ENCODE measurements at regions of chr5 and their contacts with region 1.

Region 1: GRCh38 chr5:43313035-43313853 is at the start of gene HMGCS1:
- DNase-seq: peak; percentile 100
- ATAC-seq: peak; percentile 84
- H3K4me3 ChIP-seq: peak within 1 kb of the TSS; percentile 77 to 94 (median 89)
- H3K4me3 Mint-ChIP-seq: peak within 1 kb of the TSS; percentile 99
- H3K27ac ChIP-seq: peak within 1 kb of the TSS; percentile 95 to 98
- H3K27ac Mint-ChIP-seq: peak within 1 kb of the TSS; percentile 97
- H3K4me1 ChIP-seq: peaks cover 18 to 31% of the 10 kb centered on the region in 2 donors
- H3K4me1 Mint-ChIP-seq: peaks cover 39% of the 10 kb centered on the region
- H3K27me3 ChIP-seq: no peaks in the 10 kb centered on the region
- H3K27me3 Mint-ChIP-seq: no peaks in the 10 kb centered on the region
- CTCF ChIP-seq: no peak
- total RNA-seq, gene HMGCS1: 68.4 and 68.7 TPM in 2 replicates

Region 2: DNA sequence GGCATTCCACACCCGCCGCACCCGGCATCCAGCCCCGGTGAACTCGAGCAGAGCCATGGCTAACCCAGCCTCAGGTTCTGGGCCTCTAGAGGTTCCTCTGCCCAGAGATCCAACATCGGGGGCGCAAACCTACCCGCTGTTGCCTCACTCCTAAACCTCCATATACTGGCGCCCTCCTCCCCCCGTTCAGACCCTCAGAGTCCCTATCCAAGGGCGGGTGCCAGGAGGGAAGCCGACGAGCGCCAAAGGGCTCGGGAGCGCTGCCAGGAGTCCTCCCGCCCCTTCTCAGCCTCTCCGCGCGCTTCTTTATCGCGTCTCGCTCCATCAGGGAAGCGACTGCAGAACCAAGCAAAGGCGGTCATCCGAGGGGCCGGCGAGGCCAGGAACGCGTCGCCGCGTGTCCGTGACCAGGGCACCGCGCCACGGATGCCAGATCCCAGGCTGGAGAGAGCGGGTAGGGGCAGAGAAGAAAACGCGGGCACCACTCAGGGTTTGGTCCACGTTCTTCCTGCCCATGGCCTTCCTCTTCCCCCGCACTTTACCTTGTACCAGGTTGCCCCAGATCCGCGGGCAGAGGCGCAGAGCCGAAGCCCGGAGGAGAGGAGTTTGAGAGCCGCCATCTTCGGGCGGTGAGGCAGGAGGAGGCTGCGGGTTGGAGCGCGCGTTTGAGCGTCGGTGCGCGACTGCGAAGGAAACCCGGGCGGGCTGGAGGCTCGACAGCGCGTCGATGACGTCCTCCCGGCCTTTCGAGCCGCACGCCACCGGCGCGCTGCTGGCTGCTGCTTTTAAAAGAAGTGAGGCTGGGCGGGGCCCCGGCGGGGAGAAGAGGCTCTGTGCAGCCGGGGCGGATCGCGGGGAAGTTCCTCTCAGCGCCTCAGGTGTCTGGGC is 1443.3 kb before region 1 on chr5 and contains the start of gene OXCT1:
- CTCF ChIA-PET with region 1: no interaction called
- POLR2A ChIA-PET with region 1: no interaction called
- intact Hi-C with region 1: loop called (anchors 1 kb)
- DNase-seq: peak; percentile 95
- ATAC-seq: peak; percentile 95
- H3K4me3 ChIP-seq: peak within 1 kb of the TSS; percentile 74 to 97 (median 89)
- H3K4me3 Mint-ChIP-seq: peak within 1 kb of the TSS; percentile 94
- H3K27ac ChIP-seq: peak within 1 kb of the TSS; percentile 79 to 85
- H3K27ac Mint-ChIP-seq: peak within 1 kb of the TSS; percentile 95
- H3K4me1 ChIP-seq: peaks cover 16 to 20% of the 10 kb centered on the region in 2 donors
- H3K4me1 Mint-ChIP-seq: peaks cover 38% of the 10 kb centered on the region
- H3K27me3 ChIP-seq: no peaks in the 10 kb centered on the region
- H3K27me3 Mint-ChIP-seq: no peaks in the 10 kb centered on the region
- CTCF ChIP-seq: no peak
- total RNA-seq, gene OXCT1: 34.9 and 35.6 TPM in 2 replicates

Region 3: DNA sequence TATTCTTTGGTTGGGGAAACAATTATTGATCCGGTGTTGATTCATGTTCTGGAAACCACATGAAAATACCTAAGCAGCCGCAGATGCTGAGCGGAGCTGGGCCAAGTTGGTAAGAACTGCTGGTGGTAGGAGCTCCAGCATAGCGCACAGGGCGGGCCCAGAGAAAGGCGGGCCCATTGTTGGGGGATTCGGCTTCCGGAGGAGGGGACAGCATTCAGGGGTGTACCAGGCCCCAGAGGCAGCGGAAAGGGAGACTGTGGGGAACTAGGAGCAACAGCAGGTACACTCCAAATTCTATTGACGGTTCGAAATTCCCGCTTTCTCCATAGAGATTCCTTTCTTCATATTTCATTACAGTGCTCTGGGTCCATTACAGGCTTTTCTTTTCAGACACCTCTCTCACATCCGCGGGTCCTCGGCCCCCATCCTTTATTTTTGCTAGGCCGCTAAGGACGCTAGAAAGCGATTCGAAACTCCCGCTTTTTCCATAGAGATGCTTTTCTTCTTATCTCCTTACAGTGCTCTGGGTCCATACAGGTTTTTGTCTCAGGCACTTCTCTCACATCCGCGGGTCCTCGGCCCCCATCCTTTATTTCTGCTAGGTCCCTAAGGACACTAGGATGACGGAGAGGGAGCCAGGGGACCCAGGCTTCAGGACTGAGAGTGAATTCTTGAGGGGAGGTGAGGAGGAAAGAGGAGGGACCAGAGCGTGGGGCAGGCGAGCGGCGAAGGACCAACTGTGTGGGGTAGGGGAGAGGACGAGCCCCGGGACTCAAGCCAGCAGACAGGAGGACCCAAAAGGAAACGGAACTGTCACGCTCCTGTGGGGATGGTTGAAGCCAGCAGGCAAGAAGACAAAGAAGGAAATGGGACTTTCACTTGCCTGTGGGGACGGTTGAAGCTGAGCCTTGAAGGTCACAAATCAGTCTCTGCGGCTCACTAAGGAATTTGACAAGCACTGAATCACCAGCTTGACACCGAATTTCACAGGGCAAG is 556.3 kb before region 1 on chr5 and contains the start of gene CCDC152:
- CTCF ChIA-PET with region 1: no interaction called
- POLR2A ChIA-PET with region 1: no interaction called
- intact Hi-C with region 1: no loop called
- DNase-seq: peak; percentile 50
- ATAC-seq: peak; percentile 80
- H3K4me3 ChIP-seq: peak within 1 kb of the TSS; percentile 8 to 66 (median 52)
- H3K4me3 Mint-ChIP-seq: peak within 1 kb of the TSS; percentile 89
- H3K27ac ChIP-seq: peak within 1 kb of the TSS; percentile 1 to 7
- H3K27ac Mint-ChIP-seq: peak within 1 kb of the TSS; percentile 54
- H3K4me1 ChIP-seq: peaks cover 4 to 7% of the 10 kb centered on the region in 2 donors
- H3K4me1 Mint-ChIP-seq: peaks cover 9% of the 10 kb centered on the region
- H3K27me3 ChIP-seq: no peaks in the 10 kb centered on the region
- H3K27me3 Mint-ChIP-seq: no peaks in the 10 kb centered on the region
- CTCF ChIP-seq: no peak
- total RNA-seq, gene CCDC152: 4.2 and 4.8 TPM in 2 replicates

Region 4: GRCh38 chr5:42772265-42772993 is 540.8 kb before region 1 on chr5:
- CTCF ChIA-PET with region 1: no interaction called
- POLR2A ChIA-PET with region 1: no interaction called
- intact Hi-C with region 1: no loop called
- DNase-seq: no peak
- ATAC-seq: no peak
- H3K4me3 ChIP-seq: no peak overlapping the region
- H3K4me3 Mint-ChIP-seq: no peak overlapping the region
- H3K27ac ChIP-seq: no peak overlapping the region
- H3K27ac Mint-ChIP-seq: no peak overlapping the region
- H3K4me1 ChIP-seq: no peaks in the 10 kb centered on the region
- H3K4me1 Mint-ChIP-seq: no peaks in the 10 kb centered on the region
- H3K27me3 ChIP-seq: no peaks in the 10 kb centered on the region
- H3K27me3 Mint-ChIP-seq: peaks cover 15% of the 10 kb centered on the region
- CTCF ChIP-seq: no peak

Region 5: DNA sequence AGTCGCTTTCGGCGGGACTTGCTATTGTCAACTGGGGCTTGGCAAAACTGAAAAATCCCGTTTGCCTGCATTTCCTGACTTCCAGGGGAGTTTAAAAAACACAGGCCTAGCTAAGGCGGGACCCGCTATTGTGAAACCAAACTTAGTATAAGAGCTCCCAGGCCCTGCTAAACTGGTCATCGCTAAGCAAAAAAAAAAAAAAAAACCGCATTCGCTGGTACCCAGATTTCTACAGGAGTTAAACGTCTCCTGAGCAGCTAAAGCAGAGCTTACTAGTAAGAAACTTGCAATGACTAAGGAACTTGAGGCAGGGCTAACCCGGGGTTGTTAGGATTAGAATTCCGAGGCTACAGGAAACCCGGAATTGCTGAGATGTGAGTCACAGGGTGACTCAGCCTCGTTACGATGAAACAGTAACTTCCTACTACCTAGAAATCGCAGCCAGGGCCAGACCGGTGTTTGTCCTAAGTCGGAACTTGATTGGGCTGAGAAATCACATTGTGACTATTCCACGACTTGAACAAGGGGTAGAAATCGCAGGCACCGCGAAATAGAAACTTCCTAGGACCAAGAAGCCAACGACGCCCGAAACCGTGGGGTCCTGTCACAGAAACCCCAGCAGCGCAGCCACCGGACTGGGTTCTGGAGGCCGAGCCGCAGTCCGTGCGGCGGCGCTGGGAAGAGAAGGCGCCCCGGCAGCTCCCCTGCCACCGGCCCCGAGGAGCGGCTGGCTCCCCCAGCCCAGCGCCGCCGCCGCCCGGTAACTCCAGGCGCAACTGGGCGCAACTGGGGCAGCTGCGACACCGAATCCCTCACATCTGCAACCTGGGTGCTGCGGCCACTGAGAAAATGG is 362.6 kb before region 1 on chr5:
- CTCF ChIA-PET with region 1: no interaction called
- POLR2A ChIA-PET with region 1: interaction called, 6 read pairs
- intact Hi-C with region 1: loop called (anchors 2 kb)
- DNase-seq: peak; percentile 85
- ATAC-seq: peak; percentile 44
- H3K4me3 ChIP-seq: peak overlapping the region; percentile 67 to 92 (median 85)
- H3K4me3 Mint-ChIP-seq: peak overlapping the region; percentile 99
- H3K27ac ChIP-seq: peak overlapping the region; percentile 93 to 97
- H3K27ac Mint-ChIP-seq: peak overlapping the region; percentile 100
- H3K4me1 ChIP-seq: peaks cover 13 to 33% of the 10 kb centered on the region in 2 donors
- H3K4me1 Mint-ChIP-seq: peaks cover 33% of the 10 kb centered on the region
- H3K27me3 ChIP-seq: no peaks in the 10 kb centered on the region
- H3K27me3 Mint-ChIP-seq: no peaks in the 10 kb centered on the region
- CTCF ChIP-seq: no peak

Region 6: GRCh38 chr5:43040287-43041098 is 272.8 kb before region 1 on chr5 and contains the start of gene ANXA2R:
- CTCF ChIA-PET with region 1: no interaction called
- POLR2A ChIA-PET with region 1: interaction called, 6 read pairs
- intact Hi-C with region 1: loop called (anchors 1 kb)
- DNase-seq: peak; percentile 97
- ATAC-seq: peak; percentile 60
- H3K4me3 ChIP-seq: peak within 1 kb of the TSS; percentile 62 to 95 (median 81)
- H3K4me3 Mint-ChIP-seq: peak within 1 kb of the TSS; percentile 97
- H3K27ac ChIP-seq: peak within 1 kb of the TSS; percentile 98 to 99
- H3K27ac Mint-ChIP-seq: peak within 1 kb of the TSS; percentile 98
- H3K4me1 ChIP-seq: peaks cover 25 to 44% of the 10 kb centered on the region in 2 donors
- H3K4me1 Mint-ChIP-seq: peaks cover 39% of the 10 kb centered on the region
- H3K27me3 ChIP-seq: no peaks in the 10 kb centered on the region
- H3K27me3 Mint-ChIP-seq: no peaks in the 10 kb centered on the region
- CTCF ChIP-seq: peak; percentile 86
- total RNA-seq, gene ANXA2R: 19.3 and 20.0 TPM in 2 replicates

Region 7: GRCh38 chr5:43294226-43294625 is 19.0 kb before region 1 on chr5:
- CTCF ChIA-PET with region 1: no interaction called
- POLR2A ChIA-PET with region 1: no interaction called
- intact Hi-C with region 1: no loop called
- DNase-seq: no peak
- ATAC-seq: no peak
- H3K4me3 ChIP-seq: no peak overlapping the region
- H3K4me3 Mint-ChIP-seq: no peak overlapping the region
- H3K27ac ChIP-seq: no peak overlapping the region
- H3K27ac Mint-ChIP-seq: no peak overlapping the region
- H3K4me1 ChIP-seq: no peaks in the 10 kb centered on the region
- H3K4me1 Mint-ChIP-seq: no peaks in the 10 kb centered on the region
- H3K27me3 ChIP-seq: no peaks in the 10 kb centered on the region
- H3K27me3 Mint-ChIP-seq: no peaks in the 10 kb centered on the region
- CTCF ChIP-seq: no peak

Region 8: DNA sequence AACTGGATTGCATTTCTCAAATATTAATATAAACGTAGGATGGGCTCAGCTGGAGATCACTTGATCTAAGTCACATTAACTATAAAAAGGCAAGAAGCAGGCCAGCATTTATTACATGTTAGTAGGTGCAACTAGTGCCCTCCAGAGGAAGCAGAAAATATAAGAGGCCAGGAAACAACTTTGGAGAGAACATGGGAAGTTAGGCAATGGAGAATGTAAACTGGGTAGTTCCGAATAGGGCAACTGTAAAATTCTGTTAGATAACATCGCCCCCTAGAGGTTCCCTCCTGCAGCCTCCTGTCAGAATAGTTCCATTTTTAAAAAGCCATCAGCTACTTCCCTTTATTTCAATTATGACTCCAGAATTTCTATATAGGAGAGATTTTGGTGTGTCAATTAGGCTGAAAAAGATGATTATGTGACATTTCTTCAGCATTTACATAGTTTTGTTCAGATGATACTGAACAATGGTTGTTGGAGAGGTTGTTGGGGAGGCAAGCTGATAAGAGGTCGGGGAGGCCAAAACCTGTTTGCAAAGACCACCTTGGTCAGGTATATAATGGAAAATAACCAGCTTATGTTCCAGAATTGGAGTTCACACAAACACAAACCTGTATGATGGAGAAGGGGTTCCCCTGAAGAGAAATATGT is 76.6 kb after region 1 on chr5:
- CTCF ChIA-PET with region 1: interaction called, 25 read pairs
- POLR2A ChIA-PET with region 1: no interaction called
- intact Hi-C with region 1: no loop called
- DNase-seq: peak; percentile 73
- ATAC-seq: peak; percentile 61
- H3K4me3 ChIP-seq: no peak overlapping the region
- H3K4me3 Mint-ChIP-seq: no peak overlapping the region
- H3K27ac ChIP-seq: no peak overlapping the region
- H3K27ac Mint-ChIP-seq: no peak overlapping the region
- H3K4me1 ChIP-seq: no peaks in the 10 kb centered on the region
- H3K4me1 Mint-ChIP-seq: peaks cover 17% of the 10 kb centered on the region
- H3K27me3 ChIP-seq: no peaks in the 10 kb centered on the region
- H3K27me3 Mint-ChIP-seq: no peaks in the 10 kb centered on the region
- CTCF ChIP-seq: peak; percentile 91

Region 9: GRCh38 chr5:43514816-43515677 is 201.8 kb after region 1 on chr5 and contains the start of gene C5orf34:
- CTCF ChIA-PET with region 1: interaction called, 4 read pairs
- POLR2A ChIA-PET with region 1: no interaction called
- intact Hi-C with region 1: loop called (anchors 1 kb)
- DNase-seq: peak; percentile 93
- ATAC-seq: peak; percentile 99
- H3K4me3 ChIP-seq: peak within 1 kb of the TSS; percentile 78 to 93 (median 88)
- H3K4me3 Mint-ChIP-seq: peak within 1 kb of the TSS; percentile 94
- H3K27ac ChIP-seq: peak within 1 kb of the TSS; percentile 85 to 93
- H3K27ac Mint-ChIP-seq: peak within 1 kb of the TSS; percentile 88
- H3K4me1 ChIP-seq: peaks cover 12 to 18% of the 10 kb centered on the region in 2 donors
- H3K4me1 Mint-ChIP-seq: peaks cover 23% of the 10 kb centered on the region
- H3K27me3 ChIP-seq: no peaks in the 10 kb centered on the region
- H3K27me3 Mint-ChIP-seq: no peaks in the 10 kb centered on the region
- CTCF ChIP-seq: no peak
- total RNA-seq, gene C5orf34: 5.1 and 5.5 TPM in 2 replicates